Esophagus muscularis mucosa (tissue), 4 donors: ENCODE measurements at regions of chrX and their contacts with region 1.

Region 1: GRCh38 chrX:134969726-134970125 is 21.1 kb upstream of the SMIM10 start:
- DNase-seq: no peak
- H3K4me3 ChIP-seq: no peak overlapping the region
- H3K27ac ChIP-seq: no peak overlapping the region
- H3K4me1 ChIP-seq: no peaks in the 10 kb centered on the region
- H3K27me3 ChIP-seq: no peaks in the 10 kb centered on the region
- CTCF ChIP-seq: no peak
- EP300 ChIP-seq: no peak
- POLR2A ChIP-seq: no peak

Region 2: DNA sequence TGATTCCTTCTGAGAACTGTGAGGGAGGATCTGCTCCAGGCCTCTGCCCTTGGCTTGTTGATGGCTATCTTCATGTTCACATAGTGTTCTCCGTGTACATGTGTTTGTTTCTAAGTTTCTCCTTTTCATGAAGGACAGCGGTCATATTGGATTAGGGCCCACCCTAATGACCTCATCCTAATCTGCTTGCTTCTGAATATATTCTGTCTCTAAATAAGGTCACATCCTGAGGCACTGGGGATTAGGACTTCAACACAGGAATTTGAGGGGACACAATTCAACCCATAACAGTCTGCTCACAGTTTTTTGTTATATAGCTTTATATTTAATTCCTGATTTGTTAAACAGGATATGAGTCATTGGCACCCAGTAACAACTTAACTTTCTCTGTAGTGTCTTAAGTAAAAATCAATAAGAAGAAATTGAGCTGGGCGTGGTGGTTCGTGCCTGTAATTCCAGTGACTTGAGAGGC is 133.2 kb before region 1 on chrX:
- intact Hi-C with region 1: no loop called
- DNase-seq: no peak
- H3K4me3 ChIP-seq: no peak overlapping the region
- H3K27ac ChIP-seq: no peak overlapping the region
- H3K4me1 ChIP-seq: no peaks in the 10 kb centered on the region
- H3K27me3 ChIP-seq: no peaks in the 10 kb centered on the region
- CTCF ChIP-seq: no peak
- EP300 ChIP-seq: no peak
- POLR2A ChIP-seq: no peak

Region 3: GRCh38 chrX:134999469-134999868 is 29.7 kb after region 1 on chrX:
- intact Hi-C with region 1: loop called (anchors 2 kb)
- DNase-seq: no peak
- H3K4me3 ChIP-seq: no peak overlapping the region
- H3K27ac ChIP-seq: peak overlapping the region in 3 of 4 donors; percentile 50 to 59 (median 57)
- H3K4me1 ChIP-seq: peaks cover 0 to 19% (median 17%) of the 10 kb centered on the region in 4 donors
- H3K27me3 ChIP-seq: peaks cover 0 to 5% (median 0%) of the 10 kb centered on the region in 4 donors
- CTCF ChIP-seq: peak; percentile 43 to 54 (median 46)
- EP300 ChIP-seq: no peak
- POLR2A ChIP-seq: no peak

Region 4: GRCh38 chrX:135050603-135051002 is 80.9 kb after region 1 on chrX:
- intact Hi-C with region 1: no loop called
- DNase-seq: no peak
- H3K4me3 ChIP-seq: peak overlapping the region; percentile 57 to 70 (median 61)
- H3K27ac ChIP-seq: peak overlapping the region in 3 of 4 donors; percentile 79 to 82 (median 81)
- H3K4me1 ChIP-seq: peaks cover 4 to 14% (median 11%) of the 10 kb centered on the region in 4 donors
- H3K27me3 ChIP-seq: no peaks in the 10 kb centered on the region
- CTCF ChIP-seq: no peak
- EP300 ChIP-seq: no peak
- POLR2A ChIP-seq: no peak

Region 5: GRCh38 chrX:135086197-135086854 is 116.6 kb after region 1 on chrX:
- intact Hi-C with region 1: loop called (anchors 2 kb)
- DNase-seq: no peak
- H3K4me3 ChIP-seq: no peak overlapping the region
- H3K27ac ChIP-seq: no peak overlapping the region
- H3K4me1 ChIP-seq: no peaks in the 10 kb centered on the region
- H3K27me3 ChIP-seq: no peaks in the 10 kb centered on the region
- CTCF ChIP-seq: peak; percentile 43 to 58 (median 43)
- EP300 ChIP-seq: no peak
- POLR2A ChIP-seq: no peak